ENCODE measurements at regions of chr9 and their contacts with region 1.

Region 1: GRCh38 chr9:84668196-84669012 is 1.1 kb upstream of the NTRK2 start:
- DNase-seq: peak in 1 of 9 donors; percentile 54
- ATAC-seq: peak; percentile 54
- H3K4me3 ChIP-seq: no peak overlapping the region
- H3K4me3 Mint-ChIP-seq: peak overlapping the region; percentile 6 to 78 (median 54)
- H3K27ac ChIP-seq: no peak overlapping the region
- H3K27ac Mint-ChIP-seq: no peak overlapping the region
- H3K4me1 ChIP-seq: no peaks in the 10 kb centered on the region
- H3K4me1 Mint-ChIP-seq: peaks cover 6 to 24% (median 12%) of the 10 kb centered on the region in 7 donors
- H3K27me3 ChIP-seq: peaks cover 0 to 12% of the 10 kb centered on the region in 2 donors
- H3K27me3 Mint-ChIP-seq: peaks cover 55 to 69% (median 63%) of the 10 kb centered on the region in 5 donors

Region 2: DNA sequence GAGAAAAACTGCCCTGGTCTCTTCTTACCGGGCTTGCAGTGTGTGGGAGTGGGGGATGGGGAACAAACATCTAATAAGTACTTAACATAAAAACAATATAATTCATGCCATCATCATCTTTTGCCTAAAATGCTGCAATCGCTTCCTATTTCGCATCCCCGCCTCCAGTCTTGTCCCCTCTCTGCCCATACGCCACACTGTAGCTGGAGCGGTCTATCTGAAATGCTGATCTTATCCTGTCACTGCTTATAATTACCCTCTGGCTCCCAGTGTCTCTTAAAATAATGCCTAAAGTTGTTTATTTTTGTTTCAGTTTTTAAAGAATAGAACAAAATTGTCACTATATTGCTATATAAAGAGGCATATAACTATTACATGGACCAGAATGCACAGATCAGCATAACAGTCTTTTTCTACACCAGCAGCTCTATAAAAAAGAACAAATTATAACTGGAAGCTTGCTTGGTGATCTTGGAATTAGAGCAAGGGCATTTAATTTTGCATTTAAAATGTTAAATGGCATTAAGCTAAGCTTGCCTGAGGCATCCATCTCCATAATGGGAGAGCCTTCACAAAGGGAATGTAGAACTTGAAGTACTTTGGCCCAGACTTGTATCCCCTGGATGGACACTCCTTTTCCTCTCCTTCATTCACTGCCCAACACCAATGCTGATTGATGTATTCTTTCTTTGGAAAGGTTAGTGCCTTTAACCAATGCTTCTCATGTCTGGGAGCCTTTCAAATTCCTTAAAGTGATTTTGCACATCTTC is 13.3 kb after region 1 on chr9:
- CTCF ChIA-PET with region 1: no interaction called
- POLR2A ChIA-PET with region 1: no interaction called
- intact Hi-C with region 1: no loop called
- DNase-seq: no peak
- ATAC-seq: no peak
- H3K4me3 ChIP-seq: no peak overlapping the region
- H3K4me3 Mint-ChIP-seq: no peak overlapping the region
- H3K27ac ChIP-seq: no peak overlapping the region
- H3K27ac Mint-ChIP-seq: no peak overlapping the region
- H3K4me1 ChIP-seq: no peaks in the 10 kb centered on the region
- H3K4me1 Mint-ChIP-seq: no peaks in the 10 kb centered on the region
- H3K27me3 ChIP-seq: no peaks in the 10 kb centered on the region
- H3K27me3 Mint-ChIP-seq: peaks cover 6 to 22% (median 7%) of the 10 kb centered on the region in 5 donors

Region 3: GRCh38 chr9:84781458-84781857 is 113.1 kb after region 1 on chr9:
- CTCF ChIA-PET with region 1: no interaction called
- POLR2A ChIA-PET with region 1: no interaction called
- intact Hi-C with region 1: loop called in 1 of 2 experiments (anchors 1 kb)
- DNase-seq: no peak
- ATAC-seq: no peak
- H3K4me3 ChIP-seq: no peak overlapping the region
- H3K4me3 Mint-ChIP-seq: no peak overlapping the region
- H3K27ac ChIP-seq: no peak overlapping the region
- H3K27ac Mint-ChIP-seq: no peak overlapping the region
- H3K4me1 ChIP-seq: no peaks in the 10 kb centered on the region
- H3K4me1 Mint-ChIP-seq: no peaks in the 10 kb centered on the region
- H3K27me3 ChIP-seq: no peaks in the 10 kb centered on the region
- H3K27me3 Mint-ChIP-seq: peaks cover 2 to 34% (median 21%) of the 10 kb centered on the region in 5 donors

Region 4: GRCh38 chr9:84953797-84954705 is 285.6 kb after region 1 on chr9:
- CTCF ChIA-PET with region 1: no interaction called
- POLR2A ChIA-PET with region 1: no interaction called
- intact Hi-C with region 1: loop called in 1 of 2 experiments (anchors 1 kb)
- DNase-seq: peak in 3 of 9 donors; percentile 1 to 63 (median 14)
- ATAC-seq: peak; percentile 66
- H3K4me3 ChIP-seq: no peak overlapping the region
- H3K4me3 Mint-ChIP-seq: no peak overlapping the region
- H3K27ac ChIP-seq: no peak overlapping the region
- H3K27ac Mint-ChIP-seq: no peak overlapping the region
- H3K4me1 ChIP-seq: no peaks in the 10 kb centered on the region
- H3K4me1 Mint-ChIP-seq: peaks cover 0 to 4% (median 0%) of the 10 kb centered on the region in 7 donors
- H3K27me3 ChIP-seq: no peaks in the 10 kb centered on the region
- H3K27me3 Mint-ChIP-seq: peaks cover 6 to 41% (median 14%) of the 10 kb centered on the region in 5 donors

Measured in naive thymus-derived CD4-positive, alpha-beta T cell (primary cell).